SK-MEL-5 (cell line): ENCODE measurements at regions of chr20 and their contacts with region 1.

Region 1: GRCh38 chr20:13286607-13287006 is 65.5 kb downstream of the ISM1 start:
- DNase-seq: no peak

Region 2: GRCh38 chr20:13119583-13119982 is 167.0 kb before region 1 on chr20:
- in situ Hi-C with region 1: loop called (anchors 25 kb)
- DNase-seq: peak; percentile 88

Region 3: DNA sequence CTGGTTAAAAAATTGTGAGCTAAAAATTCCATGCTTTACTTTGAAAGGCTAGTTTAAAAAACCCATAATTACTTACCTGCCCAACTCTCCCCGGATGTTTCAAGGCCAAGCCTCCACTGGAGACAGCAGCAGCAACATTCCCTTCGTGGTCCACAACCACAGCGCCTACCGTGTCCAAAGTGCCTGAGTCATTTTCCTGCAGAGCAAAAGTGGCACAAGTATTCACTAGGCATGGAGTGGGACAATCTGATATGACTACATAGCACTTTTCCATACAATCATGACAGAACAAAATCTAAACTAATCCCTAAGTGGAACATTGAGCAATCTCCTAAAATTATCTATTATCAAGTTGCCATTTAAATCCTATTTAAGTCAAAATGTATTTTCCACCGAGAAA is 247.3 kb after region 1 on chr20:
- in situ Hi-C with region 1: no loop called
- DNase-seq: no peak